ENCODE measurements at regions of chr1 and their contacts with region 1.

Region 1: DNA sequence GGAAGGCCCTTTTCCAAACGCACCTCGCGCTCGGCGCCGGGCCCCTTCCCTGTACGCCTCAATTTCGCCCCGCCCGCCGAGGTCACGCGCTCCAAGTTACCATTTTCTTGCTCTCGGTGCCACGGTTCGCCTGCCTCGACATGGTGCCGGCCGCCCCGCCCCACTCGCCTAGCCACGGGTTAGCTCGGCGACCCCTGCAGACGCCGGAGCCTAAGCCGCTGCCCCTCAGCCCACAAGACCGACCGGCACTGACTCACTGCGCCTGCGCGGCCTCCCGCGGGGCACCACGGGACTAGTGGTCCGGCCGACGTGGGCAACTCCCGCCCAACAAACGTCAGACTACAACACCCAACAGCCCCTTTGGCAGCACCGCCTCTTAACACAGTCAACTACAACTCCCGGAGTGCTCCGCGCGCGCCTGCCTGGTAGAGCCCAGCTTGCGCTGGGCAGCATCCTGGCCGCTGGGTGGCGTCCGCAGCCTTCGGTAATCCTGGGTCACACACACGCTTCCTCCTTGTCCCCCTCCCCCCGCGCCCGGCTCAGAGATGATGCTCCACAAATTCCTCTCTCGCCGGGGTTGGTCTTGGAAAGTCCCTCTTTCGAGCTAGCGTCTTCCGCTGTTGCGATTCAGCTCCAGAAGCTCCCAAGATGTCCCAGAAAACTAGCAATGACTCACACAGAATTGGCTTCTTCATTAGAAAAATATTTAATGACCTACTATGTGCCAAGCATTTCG is at the start of gene TRAPPC3:
- DNase-seq: peak; percentile 98 to 100 (median 99)
- ATAC-seq: peak; percentile 90
- H3K4me3 ChIP-seq: peak within 1 kb of the TSS; percentile 73 to 84
- H3K4me3 Mint-ChIP-seq: peak within 1 kb of the TSS; percentile 99
- H3K27ac ChIP-seq: peak within 1 kb of the TSS; percentile 69 to 94
- H3K27ac Mint-ChIP-seq: peak within 1 kb of the TSS; percentile 100
- H3K4me1 ChIP-seq: peaks cover 51% of the 10 kb centered on the region
- H3K4me1 Mint-ChIP-seq: peaks cover 73% of the 10 kb centered on the region
- H3K27me3 ChIP-seq: no peaks in the 10 kb centered on the region
- H3K27me3 Mint-ChIP-seq: no peaks in the 10 kb centered on the region
- CTCF ChIP-seq: peak; percentile 73
- total RNA-seq, gene TRAPPC3: 18.4 to 21.6 TPM

Region 2: GRCh38 chr1:35845766-35846165 is 303.6 kb before region 1 on chr1:
- CTCF ChIA-PET with region 1: no interaction called
- POLR2A ChIA-PET with region 1: no interaction called
- intact Hi-C with region 1: no loop called
- DNase-seq: no peak
- ATAC-seq: no peak
- H3K4me3 ChIP-seq: no peak overlapping the region
- H3K4me3 Mint-ChIP-seq: no peak overlapping the region
- H3K27ac ChIP-seq: no peak overlapping the region
- H3K27ac Mint-ChIP-seq: no peak overlapping the region
- H3K4me1 ChIP-seq: no peaks in the 10 kb centered on the region
- H3K4me1 Mint-ChIP-seq: no peaks in the 10 kb centered on the region
- H3K27me3 ChIP-seq: no peaks in the 10 kb centered on the region
- H3K27me3 Mint-ChIP-seq: no peaks in the 10 kb centered on the region
- CTCF ChIP-seq: no peak

Region 3: DNA sequence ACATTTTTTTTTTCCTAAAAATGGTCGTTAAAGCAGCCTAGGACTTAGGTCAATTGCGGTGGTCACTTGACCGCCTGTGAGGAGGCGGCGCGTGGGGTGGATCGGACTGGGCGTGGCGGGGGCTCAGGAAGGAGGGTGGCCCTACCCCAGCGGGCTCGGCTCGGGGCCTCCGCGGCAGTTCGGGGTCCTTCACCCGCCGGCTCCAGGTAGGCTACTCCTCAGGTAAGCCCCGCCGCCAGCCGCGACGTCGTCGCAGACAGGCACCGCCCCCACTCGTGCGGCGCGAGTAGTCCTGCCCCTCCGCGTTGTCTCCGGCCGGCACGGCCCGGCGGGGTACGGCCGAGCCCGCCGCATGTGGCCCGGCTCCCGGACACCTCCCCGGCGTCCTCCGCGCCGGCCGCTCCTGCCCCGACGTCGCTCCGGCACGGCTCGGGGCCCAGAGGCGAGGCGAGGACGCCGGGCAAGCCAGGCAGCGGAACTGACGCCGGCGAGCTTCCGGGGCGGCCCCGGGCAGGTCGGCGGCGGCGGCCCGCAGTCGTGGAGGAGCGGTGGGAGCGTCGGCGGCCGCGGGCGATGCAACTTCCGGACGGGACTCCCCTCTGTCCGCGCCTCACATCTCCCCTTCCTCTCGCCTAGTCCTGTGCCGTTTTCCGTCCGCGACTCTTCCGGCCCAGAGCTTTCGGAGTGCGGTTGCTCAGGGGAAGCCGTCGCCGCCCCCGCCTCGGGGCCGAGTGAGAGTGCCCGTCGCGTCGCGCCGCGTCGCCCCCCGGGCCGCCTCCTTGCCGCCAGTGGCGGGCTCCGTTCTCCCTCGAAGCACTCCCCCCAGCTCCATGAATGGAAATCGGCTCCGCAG is 218.6 kb before region 1 on chr1 and contains the start of gene AGO3:
- CTCF ChIA-PET with region 1: no interaction called
- POLR2A ChIA-PET with region 1: no interaction called
- intact Hi-C with region 1: loop called in 1 of 2 experiments (anchors 1 kb)
- DNase-seq: peak; percentile 70 to 97 (median 84)
- ATAC-seq: peak; percentile 79
- H3K4me3 ChIP-seq: peak within 1 kb of the TSS; percentile 66 to 93
- H3K4me3 Mint-ChIP-seq: peak within 1 kb of the TSS; percentile 94
- H3K27ac ChIP-seq: peak within 1 kb of the TSS; percentile 96
- H3K27ac Mint-ChIP-seq: peak within 1 kb of the TSS; percentile 98
- H3K4me1 ChIP-seq: peaks cover 28% of the 10 kb centered on the region
- H3K4me1 Mint-ChIP-seq: peaks cover 35% of the 10 kb centered on the region
- H3K27me3 ChIP-seq: no peaks in the 10 kb centered on the region
- H3K27me3 Mint-ChIP-seq: no peaks in the 10 kb centered on the region
- CTCF ChIP-seq: no peak
- total RNA-seq, gene AGO3: 27.6 to 30.2 TPM

Region 4: DNA sequence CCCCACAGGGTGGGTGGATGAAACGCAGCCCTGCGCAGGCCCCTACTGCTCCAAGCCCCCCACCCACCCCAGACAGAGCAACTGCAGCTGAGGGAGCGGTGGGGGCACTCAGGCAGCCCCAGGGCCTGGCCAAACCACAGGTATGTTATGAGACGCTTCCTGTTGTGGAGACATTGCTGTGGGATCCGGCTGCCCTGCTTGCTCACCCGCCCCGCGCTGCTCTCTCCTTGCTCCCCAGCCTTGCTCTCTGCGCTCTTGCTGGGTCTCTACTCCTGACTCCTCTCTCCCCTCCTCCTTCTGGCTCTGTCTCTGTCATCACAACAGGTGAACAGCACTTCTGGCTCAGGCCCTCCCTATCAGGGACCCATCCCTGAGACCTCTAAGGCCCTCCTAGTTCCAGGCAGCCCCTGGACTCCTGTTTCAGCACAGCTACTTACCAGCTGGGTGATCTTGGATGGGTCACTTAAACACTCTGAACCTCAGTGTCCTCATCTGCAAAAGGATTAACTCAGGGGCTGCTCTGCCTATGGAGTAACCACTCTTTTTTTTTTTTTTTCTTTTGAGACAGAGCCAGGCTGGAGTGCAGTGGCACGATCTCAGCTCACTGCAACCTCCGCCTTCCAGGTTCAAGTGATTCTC is 40.2 kb before region 1 on chr1:
- CTCF ChIA-PET with region 1: interaction called, 8 read pairs
- POLR2A ChIA-PET with region 1: interaction called, 13 read pairs
- intact Hi-C with region 1: no loop called
- DNase-seq: peak; percentile 31 to 84 (median 69)
- ATAC-seq: peak; percentile 97
- H3K4me3 ChIP-seq: peak overlapping the region in 1 of 2 experiments; percentile 13
- H3K4me3 Mint-ChIP-seq: peak overlapping the region; percentile 55
- H3K27ac ChIP-seq: peak overlapping the region in 1 of 2 experiments; percentile 46
- H3K27ac Mint-ChIP-seq: peak overlapping the region; percentile 80
- H3K4me1 ChIP-seq: peaks cover 39% of the 10 kb centered on the region
- H3K4me1 Mint-ChIP-seq: peaks cover 35% of the 10 kb centered on the region
- H3K27me3 ChIP-seq: no peaks in the 10 kb centered on the region
- H3K27me3 Mint-ChIP-seq: no peaks in the 10 kb centered on the region
- CTCF ChIP-seq: no peak

Region 5: GRCh38 chr1:36166938-36167910 is 17.8 kb after region 1 on chr1:
- CTCF ChIA-PET with region 1: interaction called, 95 read pairs
- POLR2A ChIA-PET with region 1: interaction called, 78 read pairs
- intact Hi-C with region 1: loop called in 1 of 2 experiments (anchors 1 kb)
- DNase-seq: no peak
- ATAC-seq: no peak
- H3K4me3 ChIP-seq: no peak overlapping the region
- H3K4me3 Mint-ChIP-seq: no peak overlapping the region
- H3K27ac ChIP-seq: no peak overlapping the region
- H3K27ac Mint-ChIP-seq: peak overlapping the region; percentile 89
- H3K4me1 ChIP-seq: peaks cover 25% of the 10 kb centered on the region
- H3K4me1 Mint-ChIP-seq: peaks cover 57% of the 10 kb centered on the region
- H3K27me3 ChIP-seq: no peaks in the 10 kb centered on the region
- H3K27me3 Mint-ChIP-seq: no peaks in the 10 kb centered on the region
- CTCF ChIP-seq: no peak

Region 6: DNA sequence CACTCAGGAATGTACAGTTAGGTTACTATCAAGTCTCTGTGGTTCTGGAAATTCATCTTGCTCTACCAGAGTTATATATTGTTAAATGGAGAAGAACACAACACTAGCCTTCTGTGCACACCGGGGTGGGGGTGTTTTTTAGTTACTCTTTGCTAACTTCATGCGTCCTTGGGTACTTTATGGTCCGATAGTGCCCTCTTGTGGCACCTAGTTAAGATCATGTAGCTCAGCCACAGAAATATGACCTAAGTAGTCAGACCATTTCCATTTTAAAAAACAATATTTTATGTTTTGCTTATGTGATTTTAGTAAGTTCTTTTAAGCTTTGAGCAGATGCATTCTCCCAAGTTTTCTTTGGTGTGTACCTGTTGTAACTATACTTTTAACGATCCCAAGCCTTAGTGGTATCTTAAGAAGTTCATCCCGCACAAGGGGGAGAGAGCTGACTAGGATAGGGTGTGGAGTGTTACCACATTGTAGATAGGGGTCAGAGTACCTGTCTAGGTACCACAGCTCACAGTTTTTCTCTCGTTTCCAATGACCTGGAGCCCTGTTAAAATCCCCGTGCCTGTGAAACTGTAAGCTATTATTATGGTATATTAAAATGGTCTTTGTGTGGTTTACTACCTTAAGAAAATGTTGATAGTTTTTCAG is 136.2 kb after region 1 on chr1:
- CTCF ChIA-PET with region 1: interaction called, 38 read pairs
- POLR2A ChIA-PET with region 1: interaction called, 4 read pairs
- intact Hi-C with region 1: loop called (anchors 1 kb)
- DNase-seq: peak; percentile 32 to 91 (median 65)
- ATAC-seq: peak; percentile 98
- H3K4me3 ChIP-seq: no peak overlapping the region
- H3K4me3 Mint-ChIP-seq: no peak overlapping the region
- H3K27ac ChIP-seq: no peak overlapping the region
- H3K27ac Mint-ChIP-seq: peak overlapping the region; percentile 9
- H3K4me1 ChIP-seq: peaks cover 4% of the 10 kb centered on the region
- H3K4me1 Mint-ChIP-seq: peaks cover 11% of the 10 kb centered on the region
- H3K27me3 ChIP-seq: no peaks in the 10 kb centered on the region
- H3K27me3 Mint-ChIP-seq: no peaks in the 10 kb centered on the region
- CTCF ChIP-seq: peak; percentile 68

Region 7: DNA sequence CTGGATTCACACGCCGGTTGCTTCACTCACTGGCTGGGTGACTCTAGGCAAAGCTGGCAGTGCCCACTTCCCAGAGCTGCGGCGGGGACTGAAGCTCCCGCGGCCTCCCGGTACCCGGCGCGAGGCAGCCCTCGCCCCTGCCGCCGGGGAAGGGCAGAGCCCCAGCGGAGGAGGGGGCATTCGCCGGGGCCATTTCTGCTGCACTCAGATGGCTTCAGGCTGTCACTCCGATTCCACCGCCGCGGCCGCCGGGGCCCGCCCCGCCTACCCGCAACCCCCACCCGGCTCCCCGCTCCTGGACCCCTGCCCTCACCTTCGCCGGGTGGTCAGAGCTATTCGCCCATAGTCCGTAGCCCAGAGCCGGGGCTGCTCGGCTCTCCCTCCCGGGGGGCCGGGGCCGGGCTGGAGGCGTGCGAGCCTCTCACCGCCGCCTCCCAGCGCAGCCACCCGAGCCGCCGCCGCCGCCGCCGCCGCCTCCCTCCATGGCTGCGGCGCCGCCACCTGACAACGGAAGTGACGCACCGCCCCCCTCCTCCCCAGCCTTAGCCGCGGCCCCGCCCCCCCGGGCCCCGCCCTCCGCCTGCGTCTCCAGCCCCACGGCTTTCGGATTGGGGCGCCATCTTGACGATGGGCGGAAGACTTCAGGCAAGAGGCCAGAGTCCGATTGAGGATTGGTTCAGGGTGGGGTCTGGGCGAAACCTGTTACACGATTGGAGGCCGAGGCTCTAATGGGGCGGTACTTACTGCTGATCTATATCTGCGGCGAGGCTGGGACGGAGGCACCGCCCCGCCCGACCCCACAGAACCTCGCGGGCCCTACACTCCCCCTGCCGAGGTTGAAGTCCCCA is 236.2 kb after region 1 on chr1 and contains the start of gene STK40:
- CTCF ChIA-PET with region 1: no interaction called
- POLR2A ChIA-PET with region 1: no interaction called
- intact Hi-C with region 1: loop called (anchors 1 kb)
- DNase-seq: peak; percentile 97 to 99 (median 98)
- ATAC-seq: peak; percentile 85
- H3K4me3 ChIP-seq: peak within 1 kb of the TSS; percentile 87 to 89
- H3K4me3 Mint-ChIP-seq: peak within 1 kb of the TSS; percentile 88
- H3K27ac ChIP-seq: peak within 1 kb of the TSS; percentile 78 to 92
- H3K27ac Mint-ChIP-seq: peak within 1 kb of the TSS; percentile 98
- H3K4me1 ChIP-seq: peaks cover 27% of the 10 kb centered on the region
- H3K4me1 Mint-ChIP-seq: peaks cover 46% of the 10 kb centered on the region
- H3K27me3 ChIP-seq: no peaks in the 10 kb centered on the region
- H3K27me3 Mint-ChIP-seq: no peaks in the 10 kb centered on the region
- CTCF ChIP-seq: no peak
- total RNA-seq, gene STK40: 13.4 to 16.9 TPM

Region 8: DNA sequence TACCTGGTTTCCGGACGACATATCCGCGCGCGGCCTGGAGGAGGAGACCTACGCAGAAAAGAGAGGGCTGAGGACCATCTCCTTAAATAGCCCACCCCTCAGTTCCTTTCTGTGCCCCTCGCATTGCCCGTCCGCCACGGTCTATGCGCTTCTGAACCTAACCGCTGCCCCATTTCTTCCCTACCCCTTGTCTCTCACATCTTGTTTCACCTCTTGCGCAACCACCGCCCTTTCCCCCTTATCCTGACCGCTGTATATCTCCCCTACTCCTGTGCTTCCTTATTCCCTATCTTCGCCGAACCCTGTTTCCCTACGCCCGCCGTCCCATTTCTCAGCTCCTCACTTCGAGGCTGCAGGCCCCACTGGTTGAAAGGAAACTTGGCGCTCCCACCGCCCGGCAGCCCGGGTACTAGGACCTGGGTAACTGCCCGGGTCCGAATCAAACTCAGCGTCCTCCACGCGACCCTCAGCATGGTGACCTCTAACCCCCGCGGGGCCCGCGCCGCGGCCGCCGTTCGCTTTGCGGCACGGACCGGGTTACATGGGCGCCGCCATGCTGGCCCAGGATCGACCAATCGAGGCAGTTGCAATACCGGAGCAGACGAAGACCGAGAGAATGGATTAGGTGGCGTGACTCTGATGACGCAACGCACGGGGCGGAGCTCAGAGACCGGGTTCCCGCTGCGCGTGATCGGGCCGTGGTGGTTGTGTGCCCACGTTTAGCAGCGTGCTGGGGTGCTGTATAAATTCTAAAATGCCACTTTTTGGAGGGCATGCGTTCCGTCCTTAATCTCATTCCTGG is 314.6 kb after region 1 on chr1 and contains the start of gene MRPS15:
- CTCF ChIA-PET with region 1: no interaction called
- POLR2A ChIA-PET with region 1: no interaction called
- intact Hi-C with region 1: loop called in 1 of 2 experiments (anchors 5 kb)
- DNase-seq: peak; percentile 88 to 97 (median 94)
- ATAC-seq: peak; percentile 98
- H3K4me3 ChIP-seq: peak within 1 kb of the TSS; percentile 90 to 92
- H3K4me3 Mint-ChIP-seq: peak within 1 kb of the TSS; percentile 91
- H3K27ac ChIP-seq: peak within 1 kb of the TSS; percentile 82 to 90
- H3K27ac Mint-ChIP-seq: peak within 1 kb of the TSS; percentile 96
- H3K4me1 ChIP-seq: peaks cover 12% of the 10 kb centered on the region
- H3K4me1 Mint-ChIP-seq: peaks cover 29% of the 10 kb centered on the region
- H3K27me3 ChIP-seq: no peaks in the 10 kb centered on the region
- H3K27me3 Mint-ChIP-seq: no peaks in the 10 kb centered on the region
- CTCF ChIP-seq: no peak
- total RNA-seq, gene MRPS15: 37.9 to 45.4 TPM